ENCODE measurements at regions of chr4 and their contacts with region 1.

Region 1: GRCh38 chr4:101347557-101348366 is 436 bp upstream of the PPP3CA start:
- DNase-seq: peak; percentile 99 to 100
- ATAC-seq: peak; percentile 97
- H3K4me3 ChIP-seq: peak overlapping the region; percentile 6 to 99
- H3K27ac ChIP-seq: peak overlapping the region; percentile 8 to 62
- H3K4me1 ChIP-seq: no peaks in the 10 kb centered on the region
- H3K27me3 ChIP-seq: no peaks in the 10 kb centered on the region

Region 2: DNA sequence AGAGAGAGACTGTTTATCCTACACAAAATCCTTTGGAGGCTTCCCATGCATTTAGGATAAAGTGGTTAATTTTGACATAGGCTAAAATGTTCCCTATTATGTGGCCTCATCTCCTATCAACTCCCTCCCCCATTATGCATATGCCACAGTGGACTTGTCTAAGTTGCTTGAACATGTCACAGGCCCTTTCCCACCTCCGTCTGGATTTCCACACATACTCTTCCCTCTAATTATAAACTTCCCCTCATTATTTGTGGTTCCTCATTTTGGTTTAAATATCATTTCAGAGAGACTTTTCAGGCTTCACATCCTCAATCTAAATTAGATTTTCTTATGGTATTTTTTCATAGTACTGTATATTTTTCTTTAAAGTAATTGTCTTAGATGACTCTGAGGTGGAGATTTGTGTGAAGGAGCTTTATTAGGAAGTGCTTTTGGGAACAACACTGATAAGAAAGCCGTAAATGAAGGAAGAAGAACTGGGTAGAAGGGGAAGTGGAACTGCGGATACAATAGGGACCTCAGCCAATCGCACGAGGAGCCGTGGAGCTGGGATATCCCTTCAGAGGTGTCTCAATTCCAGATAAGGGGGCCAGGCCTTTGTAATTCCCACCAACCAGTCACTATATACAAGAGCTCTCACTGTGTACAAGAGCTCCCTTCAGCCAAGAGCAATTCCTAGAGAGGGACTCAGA is 1829.0 kb before region 1 on chr4:
- intact Hi-C with region 1: no loop called
- DNase-seq: no peak
- ATAC-seq: no peak
- H3K4me3 ChIP-seq: no peak overlapping the region
- H3K27ac ChIP-seq: no peak overlapping the region
- H3K4me1 ChIP-seq: no peaks in the 10 kb centered on the region
- H3K27me3 ChIP-seq: no peaks in the 10 kb centered on the region

Region 3: DNA sequence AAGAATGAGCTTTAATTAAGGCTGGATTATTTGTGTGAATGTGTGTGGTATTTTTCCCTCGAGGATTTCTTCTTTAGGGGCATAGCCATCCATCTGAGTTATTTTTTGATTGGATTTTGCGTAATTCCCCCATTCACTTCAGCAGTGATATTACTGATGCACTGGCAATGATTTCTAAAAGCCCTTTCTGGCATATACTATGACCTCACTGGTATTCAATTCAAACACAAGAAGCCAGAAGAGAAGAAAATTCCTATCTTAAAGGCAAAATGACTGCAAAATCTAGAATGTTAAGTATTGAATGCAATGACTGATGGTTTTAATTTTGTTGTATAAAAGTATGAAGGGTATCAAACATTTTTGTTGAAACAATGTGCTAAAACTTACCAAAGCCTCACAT is 1086.4 kb before region 1 on chr4:
- intact Hi-C with region 1: no loop called
- DNase-seq: no peak
- ATAC-seq: no peak
- H3K4me3 ChIP-seq: no peak overlapping the region
- H3K27ac ChIP-seq: no peak overlapping the region
- H3K4me1 ChIP-seq: no peaks in the 10 kb centered on the region
- H3K27me3 ChIP-seq: no peaks in the 10 kb centered on the region

Region 4: GRCh38 chr4:101191302-101192098 is 156.3 kb before region 1 on chr4:
- intact Hi-C with region 1: loop called (anchors 10 kb)
- DNase-seq: peak; percentile 80 to 85
- ATAC-seq: peak; percentile 94
- H3K4me3 ChIP-seq: no peak overlapping the region
- H3K27ac ChIP-seq: peak overlapping the region in 1 of 2 donors; percentile 61
- H3K4me1 ChIP-seq: peaks cover 0 to 2% of the 10 kb centered on the region in 2 donors
- H3K27me3 ChIP-seq: no peaks in the 10 kb centered on the region

Region 5: GRCh38 chr4:101232074-101232776 is 115.5 kb before region 1 on chr4:
- intact Hi-C with region 1: loop called in 1 of 2 experiments (anchors 5 kb)
- DNase-seq: peak; percentile 69 to 71
- ATAC-seq: peak; percentile 57
- H3K4me3 ChIP-seq: no peak overlapping the region
- H3K27ac ChIP-seq: no peak overlapping the region
- H3K4me1 ChIP-seq: peaks cover 0 to 3% of the 10 kb centered on the region in 2 donors
- H3K27me3 ChIP-seq: no peaks in the 10 kb centered on the region

Region 6: DNA sequence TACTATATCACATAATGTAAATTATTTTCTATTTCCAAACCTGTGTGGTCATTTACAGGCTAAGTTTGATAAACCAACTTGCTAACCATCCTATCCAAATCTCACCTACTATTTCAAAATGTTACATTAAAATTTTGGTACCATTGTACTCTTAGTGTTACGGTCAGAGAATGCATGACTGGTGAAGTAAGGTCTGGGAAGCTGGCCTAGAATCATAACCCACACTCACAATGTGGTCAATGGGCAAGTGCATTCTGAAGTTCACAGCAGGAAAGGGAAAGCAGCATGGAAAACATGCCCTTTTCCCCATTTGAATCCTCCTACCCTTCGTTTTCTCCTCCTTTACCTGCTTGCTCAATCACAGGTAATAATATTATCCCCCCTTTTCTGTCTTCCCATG is 54.9 kb before region 1 on chr4:
- intact Hi-C with region 1: loop called in 1 of 2 experiments (anchors 10 kb)
- DNase-seq: no peak
- ATAC-seq: peak; percentile 74
- H3K4me3 ChIP-seq: no peak overlapping the region
- H3K27ac ChIP-seq: no peak overlapping the region
- H3K4me1 ChIP-seq: peaks cover 0 to 3% of the 10 kb centered on the region in 2 donors
- H3K27me3 ChIP-seq: no peaks in the 10 kb centered on the region

Region 7: DNA sequence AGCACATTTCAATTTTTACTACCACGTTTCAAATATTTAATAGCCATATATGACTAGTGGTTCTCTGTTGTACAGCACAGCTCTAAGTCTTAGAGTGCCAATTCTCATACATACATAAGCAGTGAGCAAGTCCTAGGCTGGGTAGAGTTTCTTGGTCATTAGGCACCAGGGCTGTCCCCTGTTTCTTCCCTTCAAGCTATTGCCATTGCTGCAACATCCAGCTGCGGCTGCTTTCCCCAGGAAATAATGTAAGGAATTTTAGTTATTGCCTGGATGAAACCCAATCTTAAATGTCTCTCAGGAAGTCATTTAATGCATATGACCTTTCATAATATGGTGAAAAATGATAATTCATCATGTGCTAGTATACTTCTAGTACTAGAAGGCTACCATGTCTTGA is 73.6 kb after region 1 on chr4:
- intact Hi-C with region 1: no loop called
- DNase-seq: no peak
- ATAC-seq: no peak
- H3K4me3 ChIP-seq: no peak overlapping the region
- H3K27ac ChIP-seq: no peak overlapping the region
- H3K4me1 ChIP-seq: no peaks in the 10 kb centered on the region
- H3K27me3 ChIP-seq: no peaks in the 10 kb centered on the region

Measured in aorta (tissue), 5 donors.